ENCODE measurements at regions of chr7 and their contacts with region 1.

Region 1: DNA sequence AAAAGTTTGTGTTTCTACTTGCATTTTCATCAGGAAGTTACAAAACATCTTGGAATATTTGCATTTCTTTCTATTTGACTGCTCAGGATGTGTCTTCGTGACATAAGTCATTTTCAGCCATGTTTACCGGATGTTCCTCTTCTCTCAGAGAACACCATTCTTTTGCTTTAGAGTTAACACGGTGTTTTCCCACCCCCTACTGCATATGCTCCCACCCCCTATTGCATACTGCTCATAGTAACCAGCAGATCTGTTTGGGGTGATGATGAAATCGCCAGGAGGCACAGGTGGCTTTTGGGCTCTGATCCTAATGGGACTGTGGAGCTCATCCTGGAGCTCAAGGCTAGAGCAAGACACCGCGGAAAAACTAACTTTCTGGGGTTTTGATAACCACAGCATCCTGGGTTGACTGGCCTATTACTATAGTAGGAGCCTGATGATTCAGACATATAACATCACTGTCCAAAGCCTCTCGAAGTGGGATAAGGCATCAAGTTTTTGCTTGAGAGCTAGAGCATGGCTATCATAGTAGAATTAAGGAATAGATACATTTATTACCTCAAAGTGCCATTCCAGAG is 65.1 kb upstream of the BET1 start:
- DNase-seq: no peak
- H3K4me3 ChIP-seq: no peak overlapping the region
- H3K27ac ChIP-seq: no peak overlapping the region
- H3K4me1 ChIP-seq: no peaks in the 10 kb centered on the region
- H3K27me3 ChIP-seq: no peaks in the 10 kb centered on the region
- CTCF ChIP-seq: no peak

Region 2: DNA sequence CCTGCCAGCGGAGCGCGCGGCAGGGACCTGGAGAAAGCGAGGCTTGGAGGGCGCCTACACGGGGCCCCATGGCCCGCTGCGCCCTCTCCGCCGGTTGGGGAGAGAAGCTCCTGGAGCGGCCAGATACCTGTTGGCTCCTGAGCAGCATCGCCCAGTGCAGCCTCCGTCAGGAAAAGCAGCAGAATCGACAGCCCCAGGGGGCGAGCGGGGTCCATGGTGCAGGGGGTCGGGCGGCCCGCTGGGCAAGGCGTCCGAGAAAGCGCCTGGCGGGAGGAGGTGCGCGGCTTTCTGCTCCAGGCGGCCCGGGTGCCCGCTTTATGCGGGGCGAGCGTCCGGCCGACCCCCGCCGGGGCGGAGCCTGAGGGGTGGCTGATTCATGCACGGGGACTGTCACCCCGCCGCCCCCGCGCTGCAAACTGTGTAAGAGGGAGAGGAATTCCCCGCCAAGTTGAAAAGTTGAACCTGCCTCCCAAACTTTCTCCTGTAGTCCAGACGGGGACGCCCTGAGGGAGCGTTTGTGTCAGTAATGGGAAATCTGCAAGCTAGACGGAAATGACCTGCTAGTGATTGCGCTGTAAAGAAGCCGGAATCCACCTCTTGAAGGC is 178.7 kb before region 1 on chr7 and contains the start of gene TFPI2:
- intact Hi-C with region 1: loop called (anchors 10 kb)
- DNase-seq: peak in 1 of 2 donors; percentile 65
- H3K4me3 ChIP-seq: peak within 1 kb of the TSS; percentile 63
- H3K27ac ChIP-seq: peak within 1 kb of the TSS in 1 of 2 donors; percentile 57
- H3K4me1 ChIP-seq: peaks cover 0 to 10% (median 4%) of the 10 kb centered on the region in 4 donors
- H3K27me3 ChIP-seq: no peaks in the 10 kb centered on the region
- CTCF ChIP-seq: no peak

Region 3: DNA sequence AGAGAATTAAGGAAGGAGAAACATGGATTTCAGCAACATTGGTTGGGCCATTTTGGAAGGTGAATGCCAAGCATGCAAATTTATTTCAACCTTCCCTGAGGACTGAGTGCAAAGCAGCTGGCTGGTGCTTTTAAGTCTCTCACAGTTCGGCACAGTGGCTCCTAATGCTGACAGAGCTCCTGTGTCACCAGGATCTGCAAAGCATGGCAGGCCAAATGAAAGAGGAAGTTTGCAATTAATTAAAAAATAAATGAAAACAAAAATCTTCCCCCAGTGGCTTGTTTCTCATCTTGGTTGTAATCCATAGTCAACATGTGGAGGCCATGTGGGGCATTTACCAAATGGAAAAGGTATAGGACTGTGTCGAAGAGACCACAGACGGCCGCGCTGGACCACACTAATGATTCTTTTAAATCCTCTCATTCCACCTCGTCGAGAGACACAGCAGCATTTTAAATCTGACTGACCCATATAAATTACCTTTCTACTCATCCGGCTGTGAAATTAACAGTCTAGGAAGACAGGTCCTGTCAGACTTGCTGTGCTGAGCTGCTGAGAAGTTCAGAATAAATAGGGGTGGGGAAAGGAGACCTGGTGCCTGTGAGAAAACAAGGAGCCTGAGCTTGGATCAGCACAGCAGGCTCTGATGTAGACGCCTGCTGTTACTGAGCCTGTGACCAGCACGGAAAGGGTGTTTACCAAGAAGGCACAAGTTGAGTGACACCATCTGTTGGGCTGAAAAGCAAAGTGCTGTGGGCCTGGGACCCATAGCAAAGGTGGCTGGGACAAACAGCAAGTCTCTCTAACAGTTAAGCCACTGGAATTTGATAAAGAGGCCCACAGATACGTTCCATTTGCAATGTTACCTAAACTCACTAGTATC is 189.4 kb after region 1 on chr7:
- intact Hi-C with region 1: no loop called
- DNase-seq: no peak
- H3K4me3 ChIP-seq: no peak overlapping the region
- H3K27ac ChIP-seq: no peak overlapping the region
- H3K4me1 ChIP-seq: no peaks in the 10 kb centered on the region
- H3K27me3 ChIP-seq: no peaks in the 10 kb centered on the region
- CTCF ChIP-seq: no peak

Measured in tibial artery (tissue), 4 donors.